Ascending aorta (tissue), 2 donors: ENCODE measurements at regions of chr12 and their contacts with region 1.

Region 1: GRCh38 chr12:120317224-120318105 is 10.1 kb downstream of the PLA2G1B start:
- DNase-seq: peak; percentile 100
- H3K4me3 ChIP-seq: peak overlapping the region; percentile 64
- H3K27ac ChIP-seq: peak overlapping the region; percentile 58 to 74
- H3K4me1 ChIP-seq: peaks cover 0 to 6% of the 10 kb centered on the region in 2 donors
- H3K27me3 ChIP-seq: no peaks in the 10 kb centered on the region
- CTCF ChIP-seq: peak; percentile 62 to 73 (median 67)

Region 2: DNA sequence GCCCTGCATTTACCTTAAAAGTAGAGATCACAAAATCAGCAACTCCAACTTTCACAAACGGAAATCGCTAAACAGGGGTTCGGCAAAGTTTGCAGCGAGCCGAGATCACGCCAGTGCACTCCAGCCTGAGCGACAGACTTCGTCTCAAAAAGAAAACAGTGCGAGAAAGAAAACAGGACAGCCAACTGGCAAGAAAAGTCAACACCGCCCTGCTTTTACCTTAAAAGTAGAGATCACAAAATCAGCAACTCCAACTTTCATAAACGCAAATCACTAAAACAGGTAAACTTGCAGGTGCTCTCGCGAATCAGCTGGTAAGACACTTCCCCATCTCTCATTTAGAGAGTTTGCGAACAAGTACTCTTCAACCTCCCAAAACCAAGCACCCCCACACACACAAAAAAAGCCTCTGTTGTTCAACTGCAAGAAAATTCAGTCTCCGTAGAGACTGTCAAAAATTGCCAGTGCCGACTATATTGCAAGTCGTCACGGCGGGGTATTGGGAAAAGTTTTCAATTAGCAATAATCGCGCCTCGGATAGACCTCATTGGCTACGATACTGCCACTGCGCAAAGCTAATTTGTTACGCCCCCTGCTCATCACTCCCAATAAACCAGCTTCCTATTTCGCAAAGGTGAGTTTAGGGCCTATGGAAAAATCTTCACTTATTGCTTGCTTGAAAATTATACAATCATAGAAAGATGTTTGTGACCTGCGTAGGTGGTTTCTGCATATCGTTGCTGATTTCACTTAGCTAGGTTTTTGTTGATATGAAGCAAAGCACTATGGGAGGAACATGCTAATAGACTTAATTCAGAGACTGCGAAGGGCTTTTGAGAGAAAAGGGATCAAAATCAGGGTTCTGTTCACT is 24.6 kb before region 1 on chr12 and contains the start of gene RNU4-1:
- intact Hi-C with region 1: loop called (anchors 2 kb)
- DNase-seq: peak in 1 of 2 donors; percentile 87
- H3K4me3 ChIP-seq: peak within 1 kb of the TSS; percentile 57 to 62
- H3K27ac ChIP-seq: peak within 1 kb of the TSS; percentile 92 to 97
- H3K4me1 ChIP-seq: peaks cover 0 to 7% of the 10 kb centered on the region in 2 donors
- H3K27me3 ChIP-seq: no peaks in the 10 kb centered on the region
- CTCF ChIP-seq: no peak
- total RNA-seq, gene RNU4-1: not detected

Region 3: DNA sequence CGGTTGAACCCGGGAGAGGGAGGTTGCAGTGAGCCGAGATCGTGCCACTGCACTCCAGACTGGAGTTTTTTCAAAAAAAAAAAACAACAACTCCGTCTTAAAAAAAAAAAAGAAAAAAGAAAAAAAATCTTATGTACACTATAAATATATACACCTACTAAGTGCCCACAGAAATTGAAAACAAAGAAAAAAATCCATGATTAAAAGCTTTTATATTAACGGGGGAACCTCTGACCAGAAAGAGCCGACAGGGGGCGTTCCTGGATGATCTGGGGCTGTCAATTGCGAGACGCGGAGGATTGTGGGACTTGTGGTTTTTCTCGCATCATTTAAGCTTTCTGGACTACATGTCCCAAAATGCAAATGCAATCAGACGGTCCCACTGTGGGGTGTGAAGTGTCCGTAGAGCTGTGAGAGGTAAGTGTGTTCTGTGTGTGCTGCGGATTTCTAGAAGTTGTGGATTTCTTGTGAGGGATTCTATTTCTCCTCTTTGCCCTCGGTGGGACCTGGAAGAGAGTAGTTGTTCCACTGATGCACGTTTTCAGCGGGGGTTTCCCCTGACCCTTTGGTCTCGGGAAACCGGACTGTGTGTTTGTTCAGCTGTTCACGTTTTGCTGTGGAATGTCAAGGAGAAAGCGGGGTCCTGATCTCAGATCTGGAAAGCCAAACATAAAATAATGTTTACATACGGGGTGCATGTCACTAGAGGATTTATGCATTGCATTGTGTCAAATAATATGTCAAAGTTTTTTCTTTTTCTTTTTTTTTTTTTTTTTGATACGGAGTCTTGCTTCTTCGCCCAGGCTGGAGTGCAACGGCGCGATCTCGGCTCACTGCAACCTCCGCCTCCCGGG is 15.3 kb before region 1 on chr12 and contains the start of gene SIRT4:
- intact Hi-C with region 1: loop called (anchors 1 kb)
- DNase-seq: peak; percentile 56 to 96
- H3K4me3 ChIP-seq: peak within 1 kb of the TSS; percentile 57 to 79
- H3K27ac ChIP-seq: peak within 1 kb of the TSS; percentile 37 to 57
- H3K4me1 ChIP-seq: no peaks in the 10 kb centered on the region
- H3K27me3 ChIP-seq: no peaks in the 10 kb centered on the region
- CTCF ChIP-seq: peak; percentile 27 to 82 (median 78)
- total RNA-seq, gene SIRT4: not detected

Region 4: DNA sequence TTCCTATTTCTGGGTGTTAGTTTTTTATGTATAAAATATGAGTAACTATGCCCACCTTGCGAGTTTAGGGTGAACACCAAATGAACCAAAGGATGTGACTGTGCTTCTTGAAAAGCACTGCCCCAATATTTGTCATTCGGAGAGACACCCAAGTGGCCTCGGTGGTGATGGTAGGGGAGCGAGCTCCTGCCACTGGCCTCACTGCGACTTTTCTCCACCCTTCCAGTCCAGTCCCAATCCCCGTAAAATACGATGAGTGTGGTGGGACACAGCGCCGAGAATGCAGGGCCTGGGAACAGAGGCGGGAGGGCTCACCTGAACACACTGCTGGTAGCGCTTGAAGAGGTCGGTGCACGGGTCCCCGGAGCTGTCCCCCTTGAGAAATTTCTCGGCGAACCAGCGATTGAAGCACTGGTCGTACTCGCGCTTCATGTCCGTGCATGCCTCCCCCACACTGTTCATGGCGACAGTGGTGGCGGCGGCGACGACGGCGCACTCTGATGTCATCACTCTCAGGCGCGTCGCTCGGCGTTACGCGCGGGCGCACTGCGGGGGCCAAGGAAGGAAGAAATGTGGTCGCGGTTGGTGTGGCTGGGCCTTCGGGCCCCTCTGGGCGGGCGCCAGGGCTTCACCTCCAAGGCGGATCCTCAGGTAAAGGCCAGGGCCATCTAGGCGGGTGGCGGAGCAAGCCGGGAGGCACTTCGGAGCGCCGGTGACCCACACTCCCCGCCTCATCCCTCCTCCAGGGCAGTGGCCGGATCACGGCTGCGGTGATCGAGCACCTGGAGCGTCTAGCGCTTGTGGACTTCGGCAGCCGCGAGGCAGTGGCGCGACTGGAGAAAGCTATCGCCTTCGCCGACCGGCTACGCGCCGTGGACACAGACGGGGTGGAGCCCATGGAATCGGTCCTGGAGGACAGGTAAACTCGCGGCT is 128.7 kb after region 1 on chr12 and contains the starts of genes GATC and TRIAP1:
- intact Hi-C with region 1: loop called (anchors 5 kb)
- DNase-seq: peak in 1 of 2 donors; percentile 89
- H3K4me3 ChIP-seq: peak within 1 kb of the TSS; percentile 81 to 98
- H3K27ac ChIP-seq: peak within 1 kb of the TSS; percentile 90 to 92
- H3K4me1 ChIP-seq: peaks cover 3 to 8% of the 10 kb centered on the region in 2 donors
- H3K27me3 ChIP-seq: no peaks in the 10 kb centered on the region
- CTCF ChIP-seq: no peak
- total RNA-seq, gene GATC: 6.2 TPM
- total RNA-seq, gene TRIAP1: 12.1 TPM

Region 5: DNA sequence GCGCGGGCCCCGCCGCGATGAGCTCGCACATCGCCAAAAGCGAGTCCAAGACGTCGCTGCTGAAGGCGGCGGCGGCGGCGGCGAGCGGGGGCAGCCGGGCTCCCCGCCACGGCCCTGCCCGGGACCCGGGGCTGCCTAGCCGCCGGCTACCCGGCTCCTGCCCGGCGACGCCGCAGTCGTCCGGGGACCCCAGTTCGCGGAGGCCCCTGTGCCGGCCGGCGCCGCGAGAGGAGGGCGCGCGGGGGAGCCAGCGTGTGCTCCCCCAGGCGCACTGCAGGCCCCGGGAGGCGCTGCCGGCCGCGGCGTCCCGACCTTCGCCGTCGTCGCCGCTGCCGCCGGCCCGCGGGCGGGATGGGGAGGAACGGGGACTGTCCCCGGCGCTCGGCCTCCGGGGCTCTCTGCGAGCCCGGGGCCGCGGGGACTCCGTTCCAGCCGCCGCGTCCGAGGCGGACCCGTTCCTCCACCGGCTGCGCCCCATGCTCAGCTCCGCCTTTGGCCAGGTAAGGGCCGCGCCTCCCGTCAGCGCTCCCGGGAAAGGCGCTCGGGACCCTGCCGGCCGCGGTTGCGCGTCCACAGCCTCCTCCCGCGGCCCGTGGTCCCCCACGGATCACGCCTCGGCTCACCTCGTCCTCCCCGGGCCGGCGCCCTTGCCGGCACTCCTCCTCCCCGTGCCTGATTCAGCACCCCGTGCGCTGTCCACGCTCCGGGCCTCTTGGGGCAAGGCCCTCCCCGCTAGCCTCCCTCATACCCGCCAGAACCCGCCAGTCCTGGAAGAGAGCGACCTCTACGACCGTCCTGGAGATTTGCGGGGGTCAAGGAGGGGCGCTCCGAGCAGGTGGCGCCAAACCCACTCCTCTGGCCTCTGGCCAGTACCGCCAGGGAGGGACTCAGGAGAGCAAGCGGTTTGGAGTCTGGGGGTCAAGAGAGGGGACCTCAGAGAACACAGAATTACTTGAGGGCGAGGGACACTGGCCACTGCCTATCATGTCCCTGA is 323.7 kb after region 1 on chr12:
- intact Hi-C with region 1: loop called (anchors 10 kb)
- DNase-seq: no peak
- H3K4me3 ChIP-seq: peak overlapping the region; percentile 51 to 64
- H3K27ac ChIP-seq: no peak overlapping the region
- H3K4me1 ChIP-seq: peaks cover 9 to 13% of the 10 kb centered on the region in 2 donors
- H3K27me3 ChIP-seq: peaks cover 19% of the 10 kb centered on the region
- CTCF ChIP-seq: no peak